Sciatic nerve (tissue), 2 donors: ENCODE measurements at regions of chr1 and their contacts with region 1.

Region 1: GRCh38 chr1:176843352-176844297 is 320.9 kb downstream of the ASTN1 start:
- DNase-seq: no peak
- ATAC-seq: peak; percentile 87

Region 2: DNA sequence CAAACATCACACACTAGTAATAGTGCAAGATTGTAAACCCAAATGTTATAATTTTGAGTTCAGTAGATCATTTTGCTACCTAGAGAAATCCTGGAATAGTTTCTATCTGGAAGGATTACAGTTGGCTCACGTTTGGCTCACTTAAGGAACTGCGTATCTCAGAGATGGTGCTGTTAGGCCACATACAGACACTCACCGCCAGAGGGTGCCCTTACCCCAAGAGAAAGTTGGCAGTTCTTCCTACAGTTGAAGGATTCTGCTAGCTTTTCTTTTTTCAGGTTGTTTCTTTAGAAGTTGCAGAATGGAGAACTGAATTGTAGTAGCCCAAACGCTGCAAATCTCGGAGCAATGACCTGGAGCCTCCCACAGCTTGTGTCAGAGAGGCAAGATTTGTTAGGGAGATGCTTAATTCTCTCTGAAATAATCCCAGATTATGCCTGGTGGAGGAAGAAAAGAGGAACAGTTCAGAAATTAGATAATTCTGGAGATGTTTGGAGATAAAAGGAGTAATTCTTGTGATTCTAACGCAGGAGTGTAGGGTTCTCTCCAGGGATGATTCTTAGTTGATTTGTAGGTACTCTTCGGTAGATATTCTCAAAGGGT is 468.6 kb before region 1 on chr1:
- intact Hi-C with region 1: loop called (anchors 5 kb)
- DNase-seq: peak; percentile 86
- ATAC-seq: peak; percentile 83

Region 3: GRCh38 chr1:176559878-176560277 is 283.7 kb before region 1 on chr1:
- intact Hi-C with region 1: loop called (anchors 10 kb)
- DNase-seq: no peak
- ATAC-seq: peak; percentile 94